Sciatic nerve (tissue), 2 donors: ENCODE measurements at regions of chr1 and their contacts with region 1.

Region 1: GRCh38 chr1:117512743-117513321 is 93.0 kb upstream of the TENT5C start:
- DNase-seq: no peak
- ATAC-seq: no peak

Region 2: GRCh38 chr1:117555806-117556205 is 43.0 kb after region 1 on chr1:
- intact Hi-C with region 1: no loop called
- DNase-seq: no peak
- ATAC-seq: no peak

Region 3: DNA sequence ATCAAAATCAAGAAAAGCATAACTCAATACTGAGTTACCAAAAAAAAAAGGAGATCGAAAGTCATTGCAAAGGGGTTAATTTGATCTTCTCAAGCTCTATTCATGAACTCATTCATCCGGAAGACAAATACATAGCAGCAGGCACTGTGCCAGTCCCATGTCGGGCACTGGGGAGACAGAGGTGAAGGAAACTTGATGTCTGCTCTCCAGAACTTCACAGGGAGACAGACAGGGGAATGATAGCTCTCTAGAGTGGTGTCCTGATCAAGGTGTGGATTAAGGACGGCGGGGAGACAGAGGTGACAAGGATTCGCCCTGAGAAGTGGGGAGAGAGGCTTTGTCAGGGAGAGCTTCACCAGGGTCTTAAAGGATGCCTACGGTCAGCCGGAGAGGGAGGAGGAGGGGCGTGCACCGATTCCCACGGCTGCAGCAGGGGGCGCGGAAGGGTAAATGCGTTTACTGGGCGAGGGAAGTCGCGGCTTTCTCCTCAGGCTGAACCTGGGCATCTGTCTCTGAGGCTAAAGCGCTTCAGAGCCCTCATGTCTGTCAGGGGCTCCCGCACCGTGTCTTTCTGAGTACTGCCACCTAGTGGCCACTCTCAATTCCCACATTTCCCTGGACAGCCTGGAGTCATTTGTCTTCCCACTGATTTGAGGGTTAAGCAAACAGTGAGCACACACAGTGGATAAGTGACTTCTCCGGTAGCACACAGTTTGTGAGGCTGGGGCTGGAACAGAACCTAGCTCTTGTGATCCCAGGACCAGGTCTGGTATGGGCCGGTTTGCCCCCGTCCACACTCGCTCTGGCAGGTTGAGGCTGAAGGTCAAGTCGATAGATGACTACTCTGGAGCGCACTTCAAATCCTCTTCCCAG is 245.8 kb after region 1 on chr1:
- intact Hi-C with region 1: loop called (anchors 10 kb)
- DNase-seq: peak; percentile 78
- ATAC-seq: peak; percentile 96